Activated CD4-positive, alpha-beta T cell treated with anti-CD3 and anti-CD28 coated beads for 36 hours (primary cell): ENCODE measurements at regions of chr18 and their contacts with region 1.

Region 1: DNA sequence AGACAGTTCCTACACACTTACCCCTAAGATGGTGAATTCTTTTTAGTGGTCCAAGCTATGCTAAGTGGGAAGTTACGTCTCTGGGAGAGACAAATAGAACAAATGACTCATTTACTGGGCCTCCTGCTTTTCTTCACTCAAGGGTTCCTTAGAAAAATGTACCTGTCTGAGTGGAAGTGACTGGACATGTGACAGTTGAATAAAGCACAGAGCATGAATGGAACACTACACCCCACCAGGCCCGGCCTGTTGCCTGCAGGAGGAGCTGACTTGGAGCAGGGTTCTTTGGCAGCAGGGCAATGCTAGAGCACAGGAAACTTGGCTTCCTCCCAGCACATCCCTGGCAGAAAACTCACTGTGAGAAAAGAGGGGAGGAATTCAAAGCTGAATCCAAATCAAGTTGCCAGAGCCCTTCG is 451.0 kb upstream of the SETBP1 start:
- DNase-seq: no peak
- ATAC-seq: no peak
- H3K4me3 Mint-ChIP-seq: no peak overlapping the region
- H3K27ac Mint-ChIP-seq: no peak overlapping the region
- H3K4me1 Mint-ChIP-seq: no peaks in the 10 kb centered on the region
- H3K27me3 Mint-ChIP-seq: no peaks in the 10 kb centered on the region

Region 2: GRCh38 chr18:43751203-43751602 is 478.5 kb before region 1 on chr18:
- CTCF ChIA-PET with region 1: no interaction called
- POLR2A ChIA-PET with region 1: no interaction called
- intact Hi-C with region 1: no loop called
- DNase-seq: no peak
- ATAC-seq: no peak
- H3K4me3 Mint-ChIP-seq: no peak overlapping the region
- H3K27ac Mint-ChIP-seq: no peak overlapping the region
- H3K4me1 Mint-ChIP-seq: no peaks in the 10 kb centered on the region
- H3K27me3 Mint-ChIP-seq: no peaks in the 10 kb centered on the region

Region 3: GRCh38 chr18:44290366-44290977 is 60.8 kb after region 1 on chr18:
- CTCF ChIA-PET with region 1: no interaction called
- POLR2A ChIA-PET with region 1: no interaction called
- intact Hi-C with region 1: loop called in 1 of 2 experiments (anchors 10 kb)
- DNase-seq: no peak
- ATAC-seq: no peak
- H3K4me3 Mint-ChIP-seq: no peak overlapping the region
- H3K27ac Mint-ChIP-seq: no peak overlapping the region
- H3K4me1 Mint-ChIP-seq: no peaks in the 10 kb centered on the region
- H3K27me3 Mint-ChIP-seq: no peaks in the 10 kb centered on the region